Posterior vena cava (tissue), 2 donors: ENCODE measurements at regions of chr10 and their contacts with region 1.

Region 1: DNA sequence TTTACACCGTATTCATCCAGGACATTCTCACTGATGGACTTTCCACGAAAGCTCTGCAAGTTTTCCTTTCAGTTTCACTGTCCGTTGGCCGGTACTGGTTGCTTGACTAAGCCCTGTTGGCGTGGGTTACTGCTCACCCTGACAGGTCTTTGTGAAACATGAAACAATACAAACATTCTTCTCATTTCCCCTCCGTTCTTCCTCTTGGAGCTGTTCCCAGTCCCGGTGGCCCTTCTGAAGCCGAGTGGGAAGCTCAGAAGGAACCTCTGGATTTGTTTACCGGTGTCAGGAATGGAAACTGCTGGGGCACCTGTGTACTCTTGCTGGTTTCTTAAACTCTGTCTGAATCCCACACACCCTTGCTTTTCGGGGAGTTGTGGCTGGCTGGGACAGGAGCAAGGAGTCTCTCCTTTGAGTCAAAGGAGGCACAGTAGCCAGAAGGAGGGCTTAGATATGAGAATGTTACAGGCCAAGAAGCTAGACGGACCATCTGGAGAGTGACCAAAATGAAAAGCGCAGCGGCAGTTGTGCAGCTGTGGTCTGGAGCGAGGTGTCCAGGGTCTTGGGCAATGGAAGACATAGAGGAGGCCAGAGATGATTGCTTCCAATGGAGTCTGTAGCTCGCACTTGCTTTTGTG is 45.7 kb downstream of the LYZL2 start:
- DNase-seq: peak; percentile 80

Region 2: DNA sequence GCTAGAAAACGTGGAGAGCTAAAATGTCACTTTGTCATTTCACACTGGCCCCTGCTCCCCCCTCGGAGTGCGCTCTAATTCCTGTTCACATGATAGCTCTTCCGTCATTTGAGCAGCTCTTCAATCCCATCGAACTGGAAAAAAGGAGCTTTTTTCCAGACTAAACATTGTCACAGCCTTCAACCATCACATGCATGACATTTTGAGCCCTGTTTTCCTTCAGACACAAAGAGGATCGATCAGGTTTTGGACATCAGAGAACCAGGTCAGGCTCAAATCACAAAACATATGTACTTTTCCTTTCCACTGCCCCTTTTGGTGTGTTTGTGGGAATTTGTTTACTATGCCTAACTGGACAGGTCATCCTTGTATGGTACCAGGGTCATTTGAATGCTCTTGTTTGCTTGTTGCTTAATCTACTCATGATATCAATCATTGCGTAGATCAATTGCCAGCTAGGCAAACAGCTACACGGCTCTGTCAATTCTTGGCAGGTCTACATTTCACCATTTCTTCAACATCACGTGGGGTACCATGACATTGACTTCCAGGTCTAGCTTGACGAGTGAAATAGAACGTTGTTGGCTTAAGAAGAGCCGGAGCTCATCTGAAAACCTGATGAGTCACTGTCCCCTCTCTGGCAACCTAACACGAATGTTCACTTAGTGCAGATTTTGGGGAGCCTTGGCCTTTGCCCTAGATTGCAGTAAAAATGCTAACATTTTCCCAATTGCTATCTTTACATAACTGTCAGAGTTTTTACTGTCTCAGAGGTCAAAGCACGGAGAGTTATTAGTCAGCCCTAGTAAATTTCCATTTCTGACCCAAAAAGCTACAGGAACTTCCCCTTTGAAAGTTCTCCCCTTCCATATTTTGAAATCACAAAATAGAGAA is 41.6 kb before region 1 on chr10:
- intact Hi-C with region 1: loop called (anchors 2 to 10 kb)
- DNase-seq: no peak

Region 3: DNA sequence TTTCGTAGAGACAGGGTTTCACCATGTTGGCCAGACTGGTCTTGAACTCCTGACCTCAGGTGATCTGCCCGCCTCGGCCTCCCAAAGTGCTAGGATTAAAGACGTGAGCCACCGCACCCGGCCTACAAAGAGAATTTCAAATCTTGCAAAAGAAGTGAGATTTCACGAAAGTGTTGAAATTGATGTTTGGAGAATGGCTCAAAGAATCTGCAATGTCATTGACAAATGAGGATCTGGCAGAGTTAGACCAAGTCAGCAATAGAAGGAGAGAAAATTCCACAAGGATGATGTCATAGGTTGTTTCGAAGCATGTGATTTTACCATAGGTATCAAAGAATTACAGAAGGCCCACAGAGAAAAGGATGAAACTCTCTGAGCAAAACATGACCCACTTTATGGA is 26.0 kb before region 1 on chr10:
- intact Hi-C with region 1: no loop called
- DNase-seq: no peak